ENCODE measurements at regions of chr2 and their contacts with region 1.

Region 1: DNA sequence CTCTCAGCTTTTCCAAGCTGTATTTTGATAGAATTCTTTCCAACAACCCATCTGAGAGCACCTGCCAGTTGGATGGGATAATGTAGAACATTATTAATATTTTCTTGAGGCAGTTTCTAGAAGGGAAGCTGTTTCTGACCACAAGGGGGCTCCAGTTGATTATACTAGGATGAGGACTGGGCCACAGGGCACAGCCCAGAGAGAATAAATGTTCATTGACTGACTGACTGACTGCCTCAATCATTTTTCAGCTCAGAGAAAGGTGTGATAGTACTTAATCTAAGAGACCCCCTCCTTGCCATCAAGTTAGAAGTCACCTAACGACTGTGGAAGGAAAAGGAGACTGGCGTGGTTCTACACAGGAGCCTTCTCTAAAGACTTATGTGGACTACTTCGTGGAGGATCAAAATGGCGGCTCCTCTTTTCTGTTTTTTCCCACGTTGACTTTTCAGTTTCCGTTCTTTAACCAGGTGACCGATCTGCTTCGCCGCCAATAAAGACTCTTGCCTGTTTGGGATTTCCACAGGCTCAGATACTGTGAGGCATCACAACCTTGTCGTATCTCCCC is 31.9 kb upstream of the CREG2 start:
- DNase-seq: peak; percentile 69
- H3K4me3 ChIP-seq: no peak overlapping the region
- CTCF ChIP-seq: peak; percentile 76

Region 2: GRCh38 chr2:101266027-101266459 is 153.1 kb before region 1 on chr2:
- in situ Hi-C with region 1: no loop called
- DNase-seq: no peak
- H3K4me3 ChIP-seq: no peak overlapping the region
- CTCF ChIP-seq: no peak

Region 3: DNA sequence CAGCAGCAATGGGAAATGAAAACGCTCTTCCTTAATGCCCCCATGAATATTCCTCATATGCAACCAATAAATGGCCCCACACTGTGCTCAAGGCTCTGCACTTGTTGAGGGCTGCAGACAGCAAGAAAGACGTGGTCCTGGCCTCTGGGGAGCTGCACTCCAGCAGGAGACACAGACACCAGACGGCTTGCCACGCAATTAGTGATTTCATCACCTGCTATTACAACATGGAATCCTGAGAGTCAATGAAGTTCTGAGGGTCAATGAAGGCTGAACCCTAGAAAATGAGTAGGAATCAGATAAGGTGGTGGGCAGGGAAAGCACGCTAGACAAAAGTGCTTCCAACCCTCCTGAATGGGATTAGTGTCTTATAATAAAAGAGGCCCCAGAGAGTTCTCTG is 50.8 kb before region 1 on chr2:
- in situ Hi-C with region 1: no loop called
- DNase-seq: no peak
- H3K4me3 ChIP-seq: no peak overlapping the region
- CTCF ChIP-seq: no peak

Region 4: DNA sequence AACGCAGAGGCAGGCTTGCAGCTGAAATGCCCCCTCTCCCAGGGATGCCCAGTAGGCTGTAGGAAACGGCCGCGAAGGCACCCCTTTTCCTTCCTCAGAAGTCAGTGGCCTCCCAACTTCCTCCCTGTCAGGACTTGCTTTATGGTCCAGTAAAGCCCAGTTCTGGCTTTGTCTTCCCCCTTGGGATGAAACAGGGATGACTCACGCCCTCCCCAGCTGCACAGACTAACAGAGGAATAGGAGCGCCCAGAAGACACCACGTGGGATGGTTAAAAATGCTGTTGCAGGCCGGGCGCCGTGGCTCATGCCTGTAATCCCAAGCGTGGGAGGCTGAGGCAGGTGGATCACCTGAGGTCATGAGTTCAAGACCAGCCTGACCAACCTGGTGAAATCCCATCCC is 38.8 kb before region 1 on chr2:
- in situ Hi-C with region 1: loop called (anchors 5 kb)
- DNase-seq: no peak
- H3K4me3 ChIP-seq: no peak overlapping the region
- CTCF ChIP-seq: no peak